Ascending aorta (tissue), 2 donors: ENCODE measurements at regions of chr3 and their contacts with region 1.

Region 1: DNA sequence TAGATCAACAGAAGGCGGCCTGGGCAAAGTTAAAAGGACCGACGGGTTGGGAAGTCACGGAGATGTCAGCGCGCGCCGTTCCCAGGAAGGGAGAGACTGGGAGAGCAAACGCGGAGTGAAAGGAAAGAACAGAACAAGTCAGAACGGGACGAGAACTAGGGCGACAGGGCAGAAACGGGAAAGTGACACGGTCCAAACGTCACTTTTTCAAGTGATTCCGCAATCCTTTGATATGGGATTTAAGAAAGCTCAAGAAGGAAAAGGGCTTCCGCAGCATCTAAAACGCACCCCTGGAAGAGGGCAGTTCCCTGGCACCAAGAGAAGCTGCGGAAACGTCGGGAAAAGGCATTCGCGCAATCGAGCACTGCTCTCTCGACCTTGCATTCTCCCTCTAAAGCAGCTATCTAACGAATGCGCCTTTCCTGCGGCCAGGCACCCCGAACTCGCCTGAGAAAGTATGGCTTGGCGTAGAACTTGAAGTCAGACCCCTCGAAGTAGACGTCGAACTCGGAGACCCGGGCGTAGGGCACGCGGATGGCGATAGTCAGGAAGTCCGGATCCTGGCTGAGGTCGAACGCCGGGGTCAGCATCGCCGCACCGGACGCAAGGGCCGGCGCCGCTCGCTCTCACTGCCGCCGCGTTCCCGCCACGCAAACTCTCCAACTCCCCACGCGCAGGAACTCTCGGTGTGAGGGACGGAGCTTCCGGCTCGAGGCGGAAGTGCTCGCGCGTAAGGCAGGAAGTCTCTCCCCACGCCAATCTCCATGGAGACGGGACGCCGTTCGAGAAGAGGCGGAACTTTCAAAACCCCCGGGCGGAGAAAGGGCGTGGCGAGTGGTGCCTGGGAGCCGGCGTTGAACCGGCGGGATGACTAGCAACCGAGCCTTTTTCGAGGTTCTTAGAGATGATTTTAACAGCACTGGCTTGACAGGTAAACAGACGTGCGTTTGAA is at the start of gene SHQ1:
- DNase-seq: peak; percentile 82 to 97
- H3K4me3 ChIP-seq: peak within 1 kb of the TSS; percentile 81 to 93
- H3K27ac ChIP-seq: peak within 1 kb of the TSS; percentile 76 to 82
- H3K4me1 ChIP-seq: peaks cover 7 to 9% of the 10 kb centered on the region in 2 donors
- H3K27me3 ChIP-seq: no peaks in the 10 kb centered on the region
- CTCF ChIP-seq: no peak
- total RNA-seq, gene SHQ1: 4.2 TPM

Region 2: DNA sequence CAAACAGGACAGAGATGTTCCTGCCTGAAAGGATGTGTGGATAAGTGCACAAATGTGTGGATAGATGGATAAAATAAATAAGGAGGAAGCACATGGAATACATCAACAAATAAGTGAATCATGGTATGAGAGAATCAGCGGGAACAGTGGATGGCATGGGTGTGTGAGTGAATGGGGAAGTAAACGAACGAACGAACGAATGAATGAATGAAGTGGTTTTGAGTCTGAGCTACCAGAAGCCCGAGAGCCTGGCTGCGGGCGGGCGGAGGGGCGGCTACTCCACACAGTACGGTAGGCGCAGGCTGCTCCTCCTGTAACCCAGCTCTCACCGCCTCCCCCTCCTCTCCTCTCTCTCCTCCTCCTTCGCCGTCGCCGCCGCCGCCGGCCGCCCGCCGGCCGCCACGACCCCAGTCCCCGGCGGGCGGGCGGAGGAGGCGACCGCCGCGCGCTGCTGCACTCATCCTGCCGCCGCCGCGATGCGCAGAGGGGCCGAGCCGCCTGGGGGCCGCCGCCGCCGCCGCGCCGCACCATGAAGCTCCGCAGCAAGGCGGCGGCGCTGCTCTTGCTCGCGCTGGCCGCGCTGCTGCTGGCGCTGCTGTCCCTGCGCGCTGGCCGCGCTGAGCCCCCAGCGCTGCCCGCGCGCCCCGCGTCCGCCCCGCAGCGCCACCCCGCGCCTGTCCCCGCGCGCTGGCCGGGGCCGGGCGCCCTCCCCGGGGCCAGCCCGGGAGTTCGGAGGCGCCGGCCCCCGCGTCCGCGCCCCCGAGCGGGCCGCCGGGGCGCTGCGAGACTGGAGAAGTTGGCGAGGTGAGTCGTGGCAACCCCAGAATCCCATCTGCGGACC is 39.9 kb after region 1 on chr3 and contains the start of gene GXYLT2:
- intact Hi-C with region 1: loop called (anchors 2 kb)
- DNase-seq: peak in 1 of 2 donors; percentile 78
- H3K4me3 ChIP-seq: peak within 1 kb of the TSS; percentile 54 to 80
- H3K27ac ChIP-seq: peak within 1 kb of the TSS; percentile 60 to 89
- H3K4me1 ChIP-seq: peaks cover 3% of the 10 kb centered on the region in 2 donors
- H3K27me3 ChIP-seq: no peaks in the 10 kb centered on the region
- CTCF ChIP-seq: peak in 2 of 3 experiments; percentile 3 to 29
- total RNA-seq, gene GXYLT2: 19.5 TPM

Region 3: GRCh38 chr3:73056014-73056844 is 208.2 kb after region 1 on chr3:
- intact Hi-C with region 1: loop called (anchors 5 kb)
- DNase-seq: no peak
- H3K4me3 ChIP-seq: no peak overlapping the region
- H3K27ac ChIP-seq: no peak overlapping the region
- H3K4me1 ChIP-seq: peaks cover 3% of the 10 kb centered on the region in 2 donors
- H3K27me3 ChIP-seq: no peaks in the 10 kb centered on the region
- CTCF ChIP-seq: peak; percentile 44 to 69 (median 45)